Endothelial cell of umbilical vein (primary cell): ENCODE measurements at regions of chr7 and their contacts with region 1.

Region 1: GRCh38 chr7:138161600-138162081 is 85.4 kb downstream of the AKR1D1 start:
- DNase-seq: peak; percentile 76
- H3K4me3 ChIP-seq: no peak overlapping the region
- H3K27ac ChIP-seq: no peak overlapping the region
- H3K4me1 ChIP-seq: no peaks in the 10 kb centered on the region
- H3K27me3 ChIP-seq: no peaks in the 10 kb centered on the region
- CTCF ChIP-seq: peak; percentile 61 to 77
- POLR2A ChIP-seq: no peak

Region 2: DNA sequence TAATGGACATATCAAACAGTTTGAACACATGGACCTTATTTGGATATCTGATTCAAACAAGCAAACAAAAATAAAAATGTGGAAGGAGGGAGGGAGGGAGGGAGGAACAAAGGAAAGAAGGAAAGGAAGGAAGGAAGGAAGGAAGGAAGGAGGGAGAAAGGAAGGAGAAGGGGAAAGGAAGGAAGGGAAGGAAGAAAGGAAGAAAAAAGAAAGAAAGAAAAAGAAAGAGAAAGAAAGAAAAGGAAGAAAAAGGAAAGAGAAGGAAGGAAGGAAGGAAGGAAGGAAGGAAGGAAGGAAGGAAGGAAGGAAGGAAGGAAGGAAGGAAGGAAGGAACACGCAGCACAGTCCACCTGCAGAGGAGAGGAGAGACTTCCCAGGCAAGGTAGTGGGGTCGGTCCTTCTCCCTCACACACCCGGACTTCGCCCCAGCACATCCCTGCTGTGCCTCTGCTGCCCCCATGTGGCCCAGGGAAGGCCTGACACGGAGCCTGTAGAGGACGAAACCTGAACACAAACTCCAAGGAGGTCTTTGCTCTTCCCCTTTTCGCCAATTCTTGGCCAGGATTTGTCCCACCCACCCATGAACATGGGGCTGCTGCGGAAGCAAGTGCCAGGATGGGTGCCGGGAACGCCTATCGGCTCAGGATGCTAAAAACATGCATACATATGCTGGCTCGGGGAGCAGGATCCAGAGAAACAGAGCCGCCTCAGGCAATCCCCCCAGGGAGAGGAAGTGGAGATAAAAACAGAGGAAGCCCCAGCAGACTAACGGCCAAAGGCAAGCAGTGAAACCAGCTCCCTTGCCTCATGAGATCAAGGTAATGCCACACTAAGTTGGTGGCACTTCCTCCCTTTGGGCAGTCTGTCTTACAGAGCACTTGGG is 262.6 kb before region 1 on chr7:
- CTCF ChIA-PET with region 1: interaction called, 7 read pairs
- POLR2A ChIA-PET with region 1: no interaction called
- dilution Hi-C with region 1: no loop called
- intact Hi-C with region 1: loop called (anchors 1 kb)
- DNase-seq: peak; percentile 73
- H3K4me3 ChIP-seq: no peak overlapping the region
- H3K27ac ChIP-seq: no peak overlapping the region
- H3K4me1 ChIP-seq: peaks cover 2% of the 10 kb centered on the region
- H3K27me3 ChIP-seq: no peaks in the 10 kb centered on the region
- CTCF ChIP-seq: peak; percentile 91 to 98
- POLR2A ChIP-seq: no peak

Region 3: DNA sequence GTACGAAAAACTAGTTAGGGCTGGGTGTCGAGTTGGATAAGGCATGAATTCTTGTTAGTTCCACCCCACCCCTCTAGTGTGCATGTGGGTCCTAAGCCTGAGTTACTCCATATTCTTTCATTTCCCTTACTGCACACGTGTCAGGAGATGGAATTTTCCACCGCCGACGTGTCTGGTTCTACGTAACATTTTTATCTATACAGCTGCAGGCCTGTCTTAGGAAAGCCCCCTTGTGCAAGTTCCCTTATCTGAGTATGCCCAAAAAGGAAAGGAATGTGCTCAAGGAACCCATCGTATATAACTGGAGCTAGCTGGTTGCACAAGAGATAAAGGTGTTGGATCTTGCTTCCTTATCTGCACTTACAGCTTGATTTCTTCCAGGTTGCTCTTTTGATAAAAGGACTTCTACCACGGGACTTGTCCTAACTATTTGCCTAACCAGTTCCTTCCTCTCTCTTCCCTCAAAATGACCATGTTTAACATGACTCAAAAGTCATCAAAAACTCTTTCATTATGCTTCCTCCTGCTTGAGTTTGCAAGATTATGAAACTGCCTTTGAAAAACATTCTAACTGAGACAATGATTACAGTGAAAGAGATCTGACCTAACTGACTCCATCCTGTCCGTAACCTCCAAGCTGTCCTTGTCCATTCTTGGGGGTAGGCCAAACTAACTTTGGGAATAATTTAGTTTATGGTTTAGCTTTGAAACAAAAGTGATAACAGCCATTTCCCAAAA is 96.0 kb after region 1 on chr7:
- CTCF ChIA-PET with region 1: no interaction called
- POLR2A ChIA-PET with region 1: no interaction called
- dilution Hi-C with region 1: no loop called
- intact Hi-C with region 1: loop called (anchors 5 kb)
- DNase-seq: peak; percentile 47
- H3K4me3 ChIP-seq: no peak overlapping the region
- H3K27ac ChIP-seq: peak overlapping the region; percentile 48
- H3K4me1 ChIP-seq: no peaks in the 10 kb centered on the region
- H3K27me3 ChIP-seq: no peaks in the 10 kb centered on the region
- CTCF ChIP-seq: no peak
- POLR2A ChIP-seq: no peak

Region 4: GRCh38 chr7:138338361-138338760 is 176.7 kb after region 1 on chr7:
- CTCF ChIA-PET with region 1: interaction called, 4 read pairs
- POLR2A ChIA-PET with region 1: no interaction called
- dilution Hi-C with region 1: no loop called
- intact Hi-C with region 1: loop called (anchors 2 kb)
- DNase-seq: peak; percentile 83
- H3K4me3 ChIP-seq: no peak overlapping the region
- H3K27ac ChIP-seq: peak overlapping the region; percentile 50
- H3K4me1 ChIP-seq: peaks cover 5% of the 10 kb centered on the region
- H3K27me3 ChIP-seq: no peaks in the 10 kb centered on the region
- CTCF ChIP-seq: no peak
- POLR2A ChIP-seq: no peak

Region 5: DNA sequence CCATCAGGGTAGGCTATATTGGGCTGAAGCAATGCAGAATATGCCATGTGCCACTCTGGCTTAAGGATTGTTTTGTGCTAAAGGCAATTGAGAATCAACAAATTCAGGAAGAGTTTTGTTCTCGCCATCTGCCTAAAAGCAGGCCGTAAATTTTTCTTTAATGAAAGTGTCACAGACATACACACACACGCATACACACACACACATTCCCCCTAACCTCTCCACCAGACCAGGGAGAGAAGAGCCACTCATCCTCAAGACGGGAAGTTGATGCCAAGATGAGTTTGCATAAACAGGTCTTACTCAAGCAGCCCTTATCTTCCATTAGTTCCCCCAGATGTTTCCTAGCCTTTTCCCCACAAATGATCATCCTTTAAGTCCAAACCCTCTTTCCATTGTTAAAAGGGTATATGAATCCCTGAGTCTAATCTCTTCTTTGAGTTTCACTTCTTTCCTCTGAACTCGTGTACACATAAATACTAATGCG is 238.8 kb after region 1 on chr7:
- CTCF ChIA-PET with region 1: no interaction called
- POLR2A ChIA-PET with region 1: no interaction called
- dilution Hi-C with region 1: no loop called
- intact Hi-C with region 1: loop called (anchors 1 kb)
- DNase-seq: peak; percentile 46
- H3K4me3 ChIP-seq: no peak overlapping the region
- H3K27ac ChIP-seq: no peak overlapping the region
- H3K4me1 ChIP-seq: peaks cover 4% of the 10 kb centered on the region
- H3K27me3 ChIP-seq: no peaks in the 10 kb centered on the region
- CTCF ChIP-seq: no peak
- POLR2A ChIP-seq: no peak

Region 6: GRCh38 chr7:138459413-138460175 is 298.0 kb after region 1 on chr7:
- CTCF ChIA-PET with region 1: interaction called, 6 read pairs
- POLR2A ChIA-PET with region 1: no interaction called
- dilution Hi-C with region 1: no loop called
- intact Hi-C with region 1: loop called (anchors 1 kb)
- DNase-seq: peak; percentile 99
- H3K4me3 ChIP-seq: peak overlapping the region; percentile 21 to 54 (median 52)
- H3K27ac ChIP-seq: no peak overlapping the region
- H3K4me1 ChIP-seq: peaks cover 5% of the 10 kb centered on the region
- H3K27me3 ChIP-seq: no peaks in the 10 kb centered on the region
- CTCF ChIP-seq: no peak
- POLR2A ChIP-seq: no peak

Region 7: DNA sequence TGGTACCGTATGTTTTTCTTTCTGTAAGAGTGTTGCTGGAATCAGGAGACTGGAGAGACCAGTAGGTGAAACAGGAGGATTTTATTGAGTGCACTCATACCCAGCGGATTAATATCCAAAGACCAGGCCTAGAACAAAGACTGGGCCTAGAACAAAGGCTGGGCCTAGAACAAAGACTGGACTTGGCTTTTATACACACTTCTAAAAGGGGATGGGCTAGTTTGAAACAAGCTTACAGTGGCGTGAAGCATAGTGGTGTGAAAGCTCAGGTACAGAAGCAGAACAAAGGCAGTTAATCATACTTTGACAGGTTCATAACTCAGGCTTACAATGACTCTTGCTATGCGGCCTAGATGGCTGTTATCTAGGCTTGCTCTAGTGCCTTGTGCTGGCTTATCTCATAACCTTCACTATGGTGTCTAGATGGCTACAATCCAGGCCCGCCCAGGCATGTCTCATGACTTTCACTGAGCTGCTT is 366.1 kb after region 1 on chr7:
- CTCF ChIA-PET with region 1: no interaction called
- POLR2A ChIA-PET with region 1: no interaction called
- dilution Hi-C with region 1: no loop called
- intact Hi-C with region 1: no loop called
- DNase-seq: peak; percentile 11
- H3K4me3 ChIP-seq: no peak overlapping the region
- H3K27ac ChIP-seq: no peak overlapping the region
- H3K4me1 ChIP-seq: no peaks in the 10 kb centered on the region
- H3K27me3 ChIP-seq: no peaks in the 10 kb centered on the region
- CTCF ChIP-seq: no peak
- POLR2A ChIP-seq: no peak

Region 8: DNA sequence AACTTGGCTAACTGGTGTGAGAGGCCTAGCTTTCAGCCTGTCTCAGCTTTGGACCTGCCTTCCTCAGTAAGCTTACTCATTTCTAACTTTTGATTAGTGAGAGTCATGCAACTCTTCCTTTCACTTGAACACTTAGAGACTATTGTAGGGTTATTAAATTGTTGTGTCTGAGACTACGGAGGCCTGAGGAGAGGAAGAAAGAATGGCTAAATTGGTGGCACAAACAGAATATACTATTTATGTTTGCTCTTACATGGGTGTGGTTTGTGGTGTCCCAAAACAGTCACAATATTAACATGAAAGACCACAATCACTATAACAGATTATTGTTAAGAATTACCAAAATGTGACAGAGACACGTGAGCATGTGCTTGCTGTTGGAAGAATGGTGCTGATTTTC is 380.5 kb after region 1 on chr7:
- CTCF ChIA-PET with region 1: no interaction called
- POLR2A ChIA-PET with region 1: no interaction called
- dilution Hi-C with region 1: no loop called
- intact Hi-C with region 1: loop called (anchors 10 kb)
- DNase-seq: no peak
- H3K4me3 ChIP-seq: no peak overlapping the region
- H3K27ac ChIP-seq: no peak overlapping the region
- H3K4me1 ChIP-seq: peaks cover 23% of the 10 kb centered on the region
- H3K27me3 ChIP-seq: no peaks in the 10 kb centered on the region
- CTCF ChIP-seq: no peak
- POLR2A ChIP-seq: no peak